ENCODE measurements at regions of chr2 and their contacts with region 1.

Region 1: DNA sequence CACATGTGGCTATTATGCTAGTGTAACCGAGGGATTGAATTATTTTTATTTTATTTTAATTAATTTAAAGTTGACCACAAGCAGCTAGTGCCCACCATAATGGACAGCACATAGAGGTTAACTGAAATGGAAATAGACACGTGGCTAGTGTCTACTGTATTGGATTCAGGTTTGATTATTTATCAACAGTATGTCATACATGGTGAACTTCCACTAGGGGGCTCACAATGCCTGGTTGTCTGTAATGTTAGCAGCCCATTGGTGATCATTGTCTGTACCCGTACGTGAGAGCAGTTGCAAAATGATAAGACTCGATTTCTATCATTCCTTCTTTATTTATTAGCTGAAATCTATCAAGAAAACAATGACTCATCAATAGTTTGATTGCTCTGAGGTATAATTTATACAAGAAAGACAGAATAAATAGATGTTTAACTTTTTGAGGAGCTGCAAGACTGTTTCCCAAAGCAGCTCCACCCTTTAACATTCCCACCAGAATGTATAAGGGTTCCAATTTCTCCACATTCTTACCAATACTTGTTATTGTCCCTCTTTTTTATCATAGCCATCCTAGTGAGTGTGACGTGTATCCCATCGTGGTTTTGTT is 76.5 kb downstream of the CYBRD1 start:
- DNase-seq: peak; percentile 34
- H3K4me3 ChIP-seq: no peak overlapping the region
- H3K27ac ChIP-seq: no peak overlapping the region
- H3K4me1 ChIP-seq: no peaks in the 10 kb centered on the region
- H3K27me3 ChIP-seq: no peaks in the 10 kb centered on the region
- CTCF ChIP-seq: peak; percentile 13 to 64 (median 61)
- POLR2A ChIP-seq: no peak

Region 2: GRCh38 chr2:172113617-172114016 is 514.8 kb after region 1 on chr2:
- intact Hi-C with region 1: loop called (anchors 5 kb)
- DNase-seq: no peak
- H3K4me3 ChIP-seq: no peak overlapping the region
- H3K27ac ChIP-seq: no peak overlapping the region
- H3K4me1 ChIP-seq: no peaks in the 10 kb centered on the region
- H3K27me3 ChIP-seq: no peaks in the 10 kb centered on the region
- CTCF ChIP-seq: peak in 2 of 4 experiments; percentile 21 to 39
- POLR2A ChIP-seq: no peak

Region 3: DNA sequence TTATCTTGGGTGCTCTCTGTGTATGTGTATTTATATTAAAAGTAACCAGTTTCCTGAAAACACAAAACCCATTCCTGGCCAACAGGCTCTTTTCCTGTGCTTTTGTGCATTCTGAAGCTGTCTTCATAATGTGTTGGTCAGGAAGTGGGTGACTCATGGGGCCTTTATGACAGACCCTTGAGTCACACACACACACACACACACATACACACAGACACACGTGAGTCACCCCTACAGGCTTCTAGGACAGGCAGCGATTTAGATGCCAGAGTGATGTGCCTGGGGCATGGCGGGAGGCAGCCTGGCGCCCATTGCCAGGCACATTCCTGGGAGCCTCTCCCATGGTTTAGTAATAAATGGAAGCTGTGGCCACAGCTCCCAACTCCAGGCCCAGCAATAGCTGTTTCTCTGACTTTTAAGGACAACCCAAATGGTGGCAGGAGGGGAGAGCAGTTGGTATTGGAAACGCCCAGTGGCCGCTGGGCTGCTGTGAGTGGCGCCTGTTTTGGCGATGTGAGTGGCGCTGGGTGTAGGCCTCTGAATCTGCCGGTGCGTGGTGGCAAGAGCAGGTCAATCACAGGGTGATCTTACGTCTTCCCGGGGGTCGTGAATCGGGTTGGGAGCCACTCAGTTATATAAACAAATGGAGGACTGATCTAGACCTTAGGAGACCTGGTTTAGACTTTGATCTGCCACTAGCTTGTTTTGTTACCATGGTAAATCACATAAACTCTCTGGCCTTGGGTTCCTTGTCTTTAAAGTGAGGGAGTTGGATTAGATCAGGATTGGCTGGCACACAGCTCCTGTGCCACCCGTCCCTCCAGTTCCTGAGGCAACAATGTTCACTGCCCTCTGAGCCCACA is 654.6 kb after region 1 on chr2:
- intact Hi-C with region 1: no loop called
- DNase-seq: peak; percentile 33
- H3K4me3 ChIP-seq: no peak overlapping the region
- H3K27ac ChIP-seq: no peak overlapping the region
- H3K4me1 ChIP-seq: peaks cover 2% of the 10 kb centered on the region
- H3K27me3 ChIP-seq: no peaks in the 10 kb centered on the region
- CTCF ChIP-seq: no peak
- POLR2A ChIP-seq: no peak

Region 4: GRCh38 chr2:172465417-172466334 is 866.9 kb after region 1 on chr2:
- intact Hi-C with region 1: loop called (anchors 10 kb)
- DNase-seq: peak; percentile 90
- H3K4me3 ChIP-seq: no peak overlapping the region
- H3K27ac ChIP-seq: peak overlapping the region; percentile 43 to 63
- H3K4me1 ChIP-seq: peaks cover 28% of the 10 kb centered on the region
- H3K27me3 ChIP-seq: no peaks in the 10 kb centered on the region
- CTCF ChIP-seq: peak; percentile 74 to 96 (median 89)
- POLR2A ChIP-seq: no peak

Region 5: GRCh38 chr2:173264603-173265366 is 1666.0 kb after region 1 on chr2:
- intact Hi-C with region 1: no loop called
- DNase-seq: no peak
- H3K4me3 ChIP-seq: no peak overlapping the region
- H3K27ac ChIP-seq: no peak overlapping the region
- H3K4me1 ChIP-seq: no peaks in the 10 kb centered on the region
- H3K27me3 ChIP-seq: no peaks in the 10 kb centered on the region
- CTCF ChIP-seq: no peak
- POLR2A ChIP-seq: no peak